Activated CD4-positive, alpha-beta T cell treated with anti-CD3 and anti-CD28 coated beads, Interleukin-2, amount 10 ng/mL, durations not matched to agents 24 days and 14 days (primary cell): ENCODE measurements at regions of chr4 and their contacts with region 1.

Region 1: GRCh38 chr4:167787231-167787630 is 305.1 kb upstream of the ANXA10 start:
- DNase-seq: no peak
- H3K4me3 Mint-ChIP-seq: no peak overlapping the region
- H3K27ac Mint-ChIP-seq: no peak overlapping the region
- H3K4me1 Mint-ChIP-seq: no peaks in the 10 kb centered on the region
- H3K27me3 Mint-ChIP-seq: no peaks in the 10 kb centered on the region

Region 2: DNA sequence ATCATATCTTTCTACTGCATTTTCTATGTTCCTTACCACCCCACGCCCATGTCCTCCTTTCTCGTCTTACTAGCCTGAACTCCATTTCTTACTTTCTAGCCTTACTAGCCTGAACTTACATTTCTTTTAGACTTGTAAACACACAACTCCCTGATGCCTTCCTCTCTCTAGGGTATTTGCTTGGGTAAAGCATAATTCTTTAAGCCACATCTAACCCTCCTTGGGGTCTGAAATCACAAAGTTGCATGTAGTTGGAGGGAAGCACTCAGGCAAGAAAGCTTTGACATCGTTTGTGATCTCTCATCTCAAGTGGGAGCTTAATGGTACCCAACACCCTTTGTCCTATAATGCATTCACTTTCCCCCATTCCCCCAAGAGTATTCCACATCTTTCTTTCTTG is 677.4 kb before region 1 on chr4:
- intact Hi-C with region 1: loop called (anchors 5 kb)
- DNase-seq: no peak
- H3K4me3 Mint-ChIP-seq: no peak overlapping the region
- H3K27ac Mint-ChIP-seq: no peak overlapping the region
- H3K4me1 Mint-ChIP-seq: no peaks in the 10 kb centered on the region
- H3K27me3 Mint-ChIP-seq: no peaks in the 10 kb centered on the region

Region 3: DNA sequence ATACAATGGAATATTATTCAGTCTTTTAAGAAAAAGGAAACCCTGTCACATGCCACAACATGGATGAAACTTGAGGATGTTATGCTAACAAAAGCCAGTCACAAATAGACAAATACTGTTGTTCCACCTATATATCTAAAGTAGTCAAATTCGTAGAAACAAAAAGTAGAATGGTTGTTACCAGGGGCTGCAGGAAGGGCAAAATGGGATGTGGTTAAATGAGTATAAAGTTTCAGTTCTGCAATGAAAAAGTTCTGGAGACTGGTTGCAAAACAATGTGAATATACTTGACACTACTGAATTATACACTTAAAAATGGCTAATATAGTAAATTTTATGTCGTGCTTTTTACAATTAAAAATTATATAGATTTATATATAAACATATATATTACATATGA is 565.1 kb before region 1 on chr4:
- intact Hi-C with region 1: no loop called
- DNase-seq: no peak
- H3K4me3 Mint-ChIP-seq: no peak overlapping the region
- H3K27ac Mint-ChIP-seq: no peak overlapping the region
- H3K4me1 Mint-ChIP-seq: no peaks in the 10 kb centered on the region
- H3K27me3 Mint-ChIP-seq: no peaks in the 10 kb centered on the region

Region 4: DNA sequence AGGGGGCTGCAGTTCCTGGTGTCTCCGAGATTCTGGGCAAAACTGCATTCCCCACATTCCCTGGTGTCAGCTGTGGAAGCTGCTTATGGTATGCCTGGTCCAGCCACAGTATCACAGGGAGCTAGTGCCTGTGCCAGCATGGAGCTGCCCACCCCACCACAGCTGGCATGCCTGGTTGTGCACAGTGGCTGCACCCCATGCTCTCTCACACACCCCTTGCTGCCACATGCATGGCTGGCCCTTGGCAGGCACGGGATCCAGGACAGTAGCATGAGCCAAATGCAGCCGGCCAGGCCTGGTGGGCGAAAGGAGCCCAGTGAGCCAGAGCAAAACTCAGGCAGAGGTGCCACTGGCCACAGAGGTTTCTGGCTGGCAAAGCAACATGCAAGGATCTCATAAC is 135.0 kb before region 1 on chr4:
- intact Hi-C with region 1: no loop called
- DNase-seq: no peak
- H3K4me3 Mint-ChIP-seq: no peak overlapping the region
- H3K27ac Mint-ChIP-seq: no peak overlapping the region
- H3K4me1 Mint-ChIP-seq: no peaks in the 10 kb centered on the region
- H3K27me3 Mint-ChIP-seq: no peaks in the 10 kb centered on the region

Region 5: DNA sequence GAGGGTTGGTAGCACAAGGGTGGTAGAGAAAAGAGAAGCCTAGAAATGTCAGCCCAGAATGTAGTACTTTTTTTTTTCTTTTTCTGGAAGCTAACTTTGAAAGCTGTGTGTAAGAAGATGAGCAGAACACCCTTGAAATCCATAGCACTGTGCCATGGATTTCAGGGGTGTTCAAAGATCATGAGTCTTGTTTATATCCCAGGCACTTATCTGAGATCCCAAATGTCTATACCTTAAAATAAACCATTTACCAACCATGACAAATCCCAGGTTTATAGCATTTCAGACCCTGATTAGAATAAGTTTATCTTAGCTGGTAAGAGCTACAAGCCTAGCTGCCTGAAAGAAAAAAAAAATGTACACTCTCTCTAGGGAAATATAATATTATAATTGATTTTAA is 84.8 kb before region 1 on chr4:
- intact Hi-C with region 1: no loop called
- DNase-seq: no peak
- H3K4me3 Mint-ChIP-seq: no peak overlapping the region
- H3K27ac Mint-ChIP-seq: no peak overlapping the region
- H3K4me1 Mint-ChIP-seq: no peaks in the 10 kb centered on the region
- H3K27me3 Mint-ChIP-seq: no peaks in the 10 kb centered on the region

Region 6: DNA sequence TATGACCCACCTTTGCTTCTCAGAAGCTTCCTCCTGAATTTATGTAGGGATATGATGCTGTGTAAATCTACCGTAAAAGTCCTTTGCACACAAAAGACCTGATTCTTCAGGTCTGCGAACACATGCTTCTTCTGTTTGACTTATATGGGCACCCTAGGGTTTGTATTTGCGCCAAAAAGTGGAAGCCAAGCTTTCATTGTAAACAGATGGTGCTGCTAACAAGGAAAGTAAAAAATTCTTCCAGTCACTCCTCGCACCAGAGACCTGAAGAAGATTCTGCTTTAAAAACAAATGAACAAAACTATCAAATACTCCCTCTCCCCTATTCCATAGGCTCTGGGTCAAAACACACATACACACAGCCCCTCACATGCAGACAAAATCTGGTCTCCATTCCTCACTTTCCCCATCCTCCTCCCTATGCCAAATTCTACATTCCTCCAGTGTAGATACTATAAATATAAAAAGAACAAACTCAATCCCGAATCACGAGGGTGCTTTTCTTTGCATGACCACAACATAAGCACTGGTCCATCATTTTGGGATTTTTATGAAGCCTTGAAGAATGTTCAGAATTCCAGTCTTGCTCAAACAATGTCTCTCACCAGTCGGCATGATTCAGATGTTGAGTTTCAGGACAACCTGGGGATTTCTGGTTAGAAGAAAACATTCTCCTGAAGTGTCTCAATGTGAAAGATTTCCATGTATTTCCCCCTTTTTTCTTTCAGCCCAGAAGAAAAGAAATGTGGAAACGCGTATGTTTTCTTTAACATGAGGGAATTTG is 834.8 kb after region 1 on chr4:
- intact Hi-C with region 1: no loop called
- DNase-seq: no peak
- H3K4me3 Mint-ChIP-seq: no peak overlapping the region
- H3K27ac Mint-ChIP-seq: no peak overlapping the region
- H3K4me1 Mint-ChIP-seq: no peaks in the 10 kb centered on the region
- H3K27me3 Mint-ChIP-seq: peaks cover 37% of the 10 kb centered on the region